ENCODE measurements at regions of chr22 and their contacts with region 1.

Region 1: DNA sequence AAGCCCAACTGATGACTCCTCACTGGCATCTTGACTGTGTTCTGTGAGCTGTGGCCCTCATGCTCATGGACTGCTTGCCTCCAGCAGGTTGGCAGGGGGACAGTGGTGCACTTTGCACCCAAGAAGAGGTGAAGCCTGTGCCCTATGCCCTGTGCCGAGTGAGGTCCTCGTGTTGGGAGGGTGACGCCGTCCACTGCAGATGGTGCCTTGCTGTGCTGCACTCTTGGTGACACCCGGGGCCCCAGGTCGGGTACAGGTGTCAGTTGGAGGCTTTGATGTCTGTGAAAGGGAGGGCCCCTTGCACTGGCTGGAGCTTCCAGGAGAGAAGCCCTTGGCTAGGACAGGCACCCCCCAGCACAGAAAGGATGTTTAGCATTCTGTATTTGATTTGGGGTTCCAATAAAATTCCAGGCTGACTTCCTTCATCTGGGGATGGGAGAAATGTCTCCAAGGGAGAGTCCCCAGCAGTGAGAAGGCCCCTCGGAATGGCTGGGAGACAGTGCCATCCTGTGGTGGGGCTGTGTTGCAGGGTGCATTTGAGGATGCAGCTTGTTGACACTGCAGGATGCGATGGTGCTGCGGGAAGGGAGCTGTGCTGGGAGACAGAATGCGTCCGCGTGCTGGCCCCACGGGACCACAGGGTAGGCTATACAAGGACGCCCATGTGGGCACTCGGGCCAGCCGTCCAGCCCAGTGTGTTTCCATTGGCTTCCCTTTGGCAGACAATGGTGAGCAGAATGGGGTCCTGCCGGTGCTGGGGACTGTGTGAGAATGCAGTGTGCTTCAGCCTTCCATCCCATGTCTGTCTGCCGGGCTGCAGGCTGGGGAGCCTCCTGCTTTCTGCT is 2.5 kb upstream of the ZDHHC8 start:
- DNase-seq: peak in 18 of 42 donors; percentile 20 to 67 (median 48)

Region 2: DNA sequence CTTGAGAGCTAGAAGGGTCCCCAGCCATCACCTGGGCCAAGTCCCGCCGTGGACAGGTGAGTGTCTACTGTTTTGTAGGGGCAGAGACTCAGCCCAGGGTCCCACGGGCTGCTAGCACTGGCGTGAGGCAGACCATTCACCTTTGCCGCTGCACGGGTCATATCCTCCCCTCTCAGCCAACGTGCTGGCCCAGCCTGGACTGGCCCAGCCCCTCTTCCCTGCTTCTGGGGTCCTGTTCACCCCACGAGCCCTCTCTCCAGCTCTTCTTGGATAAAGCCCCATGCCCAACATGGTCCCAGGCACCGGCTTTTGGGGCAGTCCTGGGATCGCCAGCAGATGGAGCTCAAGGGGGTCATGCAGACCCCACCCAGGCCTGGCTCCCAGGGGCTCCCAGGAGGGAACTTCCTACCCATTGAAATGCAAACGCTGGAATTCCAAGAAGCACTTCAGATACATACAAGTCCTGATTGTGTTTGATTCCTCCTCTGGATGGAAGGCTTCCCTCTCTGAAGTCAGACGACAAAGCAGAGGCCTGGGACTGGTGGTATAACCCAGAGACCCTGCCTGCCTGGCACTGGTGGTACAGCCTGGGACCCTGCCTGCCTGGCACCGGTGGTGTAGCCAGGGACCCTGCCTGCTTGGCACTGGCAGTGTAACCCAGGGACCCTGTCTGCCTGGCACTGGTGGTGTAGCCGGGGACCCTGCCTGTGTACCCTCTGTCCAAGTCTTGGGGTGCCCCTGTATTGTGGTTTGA is 423.8 kb before region 1 on chr22:
- intact Hi-C with region 1: no loop called
- DNase-seq: peak in 8 of 42 donors; percentile 6 to 31 (median 12)

Region 3: GRCh38 chr22:19962233-19962908 is 166.8 kb before region 1 on chr22:
- intact Hi-C with region 1: loop called (anchors 10 kb)
- DNase-seq: peak; percentile 71 to 93 (median 86)

Region 4: DNA sequence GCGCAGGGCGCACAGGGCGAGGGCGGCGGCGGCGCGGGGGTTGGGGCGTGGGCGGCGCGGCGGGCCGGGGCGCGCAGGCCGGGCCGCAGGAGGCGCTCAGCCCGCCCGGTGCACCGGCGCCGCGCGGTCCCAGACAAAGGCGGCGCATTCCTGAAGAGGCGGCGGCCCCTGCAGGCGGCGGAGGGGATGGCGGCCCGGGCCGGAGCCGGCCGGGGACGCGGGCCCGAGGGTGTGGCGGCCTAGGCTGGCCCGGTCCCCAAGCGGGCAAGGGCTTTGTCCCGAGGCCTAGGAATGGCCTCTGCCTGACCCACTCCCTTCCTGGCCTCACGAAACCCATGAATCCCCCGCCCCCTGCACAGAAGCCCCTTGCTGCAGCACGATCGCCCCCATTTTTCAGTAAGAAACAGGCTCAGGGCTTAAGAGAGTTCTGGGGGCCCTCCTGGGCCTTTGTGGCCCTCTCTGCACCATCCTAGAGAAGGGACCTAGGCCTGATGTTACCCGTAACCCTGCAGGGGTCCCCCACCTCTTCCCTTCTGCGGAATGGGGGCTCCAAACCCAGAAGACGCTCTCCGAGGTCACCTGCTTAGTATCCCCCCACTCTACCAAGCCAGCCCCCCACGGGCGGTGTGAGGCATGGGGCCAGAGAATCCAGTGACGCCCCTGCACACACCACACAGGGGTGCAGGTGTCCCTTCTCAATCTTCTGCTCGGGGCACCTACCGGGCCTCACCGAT is 139.3 kb after region 1 on chr22 and contains the start of gene RTN4R:
- intact Hi-C with region 1: no loop called
- DNase-seq: peak in 35 of 42 donors; percentile 20 to 81 (median 61)